ENCODE measurements at regions of chr18 and their contacts with region 1.

Region 1: GRCh38 chr18:52716973-52717372 is 377.0 kb downstream of the DCC start:
- DNase-seq: peak; percentile 45 to 70
- ATAC-seq: peak; percentile 98

Region 2: GRCh38 chr18:52422985-52423601 is 293.9 kb before region 1 on chr18:
- intact Hi-C with region 1: no loop called
- DNase-seq: no peak
- ATAC-seq: no peak

Region 3: DNA sequence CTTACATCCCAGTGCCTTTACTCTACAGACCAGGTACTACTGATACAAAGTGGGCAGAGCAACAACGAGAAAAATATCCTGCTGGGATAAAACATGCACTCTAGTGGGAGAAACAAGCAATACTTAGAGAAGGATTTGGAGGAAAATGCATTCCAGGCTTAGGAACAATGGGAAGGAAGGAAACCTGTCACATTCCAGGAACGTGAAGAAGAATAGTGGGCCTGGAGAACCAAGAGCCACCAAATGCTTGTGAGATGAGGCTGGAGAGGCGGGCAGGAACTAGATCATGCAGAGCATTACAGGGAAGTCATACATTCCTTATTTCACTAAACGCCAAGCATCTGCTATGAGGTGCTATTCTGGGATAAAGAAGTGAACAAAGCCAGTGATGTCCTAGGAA is 34.7 kb before region 1 on chr18:
- intact Hi-C with region 1: no loop called
- DNase-seq: no peak
- ATAC-seq: no peak

Region 4: DNA sequence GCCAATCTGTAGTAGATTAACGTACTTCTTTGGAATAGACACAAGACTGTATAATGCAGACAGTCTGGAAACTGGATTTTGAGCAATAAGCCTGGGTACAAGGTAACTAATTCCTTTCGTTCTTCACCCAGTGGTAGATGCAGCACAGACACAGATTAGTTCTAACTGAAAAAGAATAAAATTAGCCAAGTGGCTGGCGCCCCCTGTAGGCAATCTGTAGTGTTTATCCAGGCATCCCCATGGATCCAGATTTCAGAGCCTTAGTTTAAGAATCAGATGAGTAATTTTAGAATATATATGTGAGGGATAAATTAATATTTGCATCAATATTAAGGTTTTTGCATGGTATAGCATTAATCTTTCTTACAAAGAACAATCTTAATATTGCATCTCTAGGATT is 186.9 kb after region 1 on chr18:
- intact Hi-C with region 1: loop called in 1 of 2 experiments (anchors 10 kb)
- DNase-seq: peak in 1 of 2 donors; percentile 71
- ATAC-seq: peak; percentile 84